PC-9 (cell line): ENCODE measurements at regions of chr1 and their contacts with region 1.

Region 1: DNA sequence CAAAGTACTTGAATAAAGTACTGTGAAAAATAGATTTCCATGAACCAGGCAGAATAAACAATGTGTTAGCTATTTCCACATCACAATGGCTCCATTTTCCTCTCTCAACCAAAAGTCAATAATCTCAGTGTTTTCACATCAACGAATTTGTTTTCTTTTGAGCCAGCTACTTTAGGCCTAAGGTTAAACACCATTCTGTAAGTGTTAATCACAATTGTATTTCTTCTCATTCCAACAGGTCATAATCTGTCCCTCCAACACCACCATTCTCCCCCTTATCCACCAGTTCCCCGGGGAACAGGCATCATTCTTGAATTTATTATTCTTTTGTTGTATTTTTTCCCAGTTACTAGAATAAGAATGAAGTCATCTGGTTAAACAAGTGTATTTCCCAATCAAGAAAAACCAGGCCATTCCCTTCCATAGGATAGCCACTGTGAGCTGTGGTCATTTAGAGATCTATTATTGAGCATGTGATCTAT is 66.2 kb upstream of the PALMD start:
- DNase-seq: no peak
- H3K4me3 ChIP-seq: no peak overlapping the region
- H3K27ac ChIP-seq: no peak overlapping the region
- H3K4me1 ChIP-seq: no peaks in the 10 kb centered on the region
- H3K27me3 ChIP-seq: no peaks in the 10 kb centered on the region
- CTCF ChIP-seq: no peak

Region 2: DNA sequence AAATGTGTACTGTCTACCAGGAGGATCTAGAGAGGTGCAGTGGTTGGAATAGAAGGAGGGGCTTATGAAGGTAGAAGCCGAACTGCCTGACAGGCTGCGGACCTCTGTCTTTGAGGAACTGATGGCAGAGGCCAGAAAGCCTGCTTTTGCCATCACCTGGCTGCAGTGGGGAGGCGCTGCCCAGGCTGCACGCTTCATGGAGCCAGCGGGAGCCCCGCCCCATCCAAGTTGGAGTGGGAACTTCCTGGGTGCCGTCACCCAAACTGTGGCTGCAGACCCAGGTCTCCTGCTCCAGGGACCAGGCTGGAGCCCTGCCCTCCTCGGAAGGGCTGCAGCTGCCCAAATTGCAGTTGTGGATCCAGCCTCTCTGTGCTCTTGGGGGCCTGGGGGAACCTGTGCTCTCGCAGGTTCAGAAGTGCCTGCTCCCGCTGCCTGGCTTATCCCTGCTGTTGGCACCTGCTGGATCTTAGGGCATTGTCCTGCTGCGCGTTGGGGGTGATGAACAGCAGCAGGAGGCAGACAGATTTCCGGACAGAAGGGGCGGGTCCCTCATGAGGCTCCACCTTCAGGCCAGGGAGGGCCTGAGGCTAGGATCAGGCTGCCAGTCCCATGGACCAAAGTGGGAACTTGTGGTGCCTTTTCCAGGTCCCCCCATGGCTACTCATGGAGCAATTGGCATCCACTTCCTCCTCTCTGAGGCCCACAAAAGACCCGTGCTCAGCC is 433.4 kb before region 1 on chr1:
- CTCF ChIA-PET with region 1: no interaction called
- POLR2A ChIA-PET with region 1: no interaction called
- intact Hi-C with region 1: no loop called
- DNase-seq: peak; percentile 10 to 32
- H3K4me3 ChIP-seq: no peak overlapping the region
- H3K27ac ChIP-seq: no peak overlapping the region
- H3K4me1 ChIP-seq: no peaks in the 10 kb centered on the region
- H3K27me3 ChIP-seq: no peaks in the 10 kb centered on the region
- CTCF ChIP-seq: no peak

Region 3: GRCh38 chr1:99180343-99180808 is 399.4 kb before region 1 on chr1:
- CTCF ChIA-PET with region 1: interaction called, 19 read pairs
- POLR2A ChIA-PET with region 1: no interaction called
- intact Hi-C with region 1: no loop called
- DNase-seq: peak; percentile 46 to 59
- H3K4me3 ChIP-seq: no peak overlapping the region
- H3K27ac ChIP-seq: no peak overlapping the region
- H3K4me1 ChIP-seq: no peaks in the 10 kb centered on the region
- H3K27me3 ChIP-seq: no peaks in the 10 kb centered on the region
- CTCF ChIP-seq: peak; percentile 99